ENCODE measurements at regions of chr4 and their contacts with region 1.

Region 1: GRCh38 chr4:26161030-26161824 is 159.6 kb upstream of the RBPJ start:
- DNase-seq: peak; percentile 33
- ATAC-seq: peak; percentile 94
- H3K4me3 Mint-ChIP-seq: no peak overlapping the region
- H3K27ac Mint-ChIP-seq: no peak overlapping the region
- H3K4me1 Mint-ChIP-seq: peaks cover 16% of the 10 kb centered on the region
- H3K27me3 Mint-ChIP-seq: no peaks in the 10 kb centered on the region
- CTCF ChIP-seq: no peak

Region 2: GRCh38 chr4:25949173-25949748 is 212.0 kb before region 1 on chr4:
- CTCF ChIA-PET with region 1: no interaction called
- POLR2A ChIA-PET with region 1: no interaction called
- DNase-seq: peak; percentile 54
- ATAC-seq: peak; percentile 58
- H3K4me3 Mint-ChIP-seq: no peak overlapping the region
- H3K27ac Mint-ChIP-seq: no peak overlapping the region
- H3K4me1 Mint-ChIP-seq: peaks cover 49% of the 10 kb centered on the region
- H3K27me3 Mint-ChIP-seq: peaks cover 4% of the 10 kb centered on the region; the same call in 1 of the 2 replicates
- CTCF ChIP-seq: no peak

Region 3: DNA sequence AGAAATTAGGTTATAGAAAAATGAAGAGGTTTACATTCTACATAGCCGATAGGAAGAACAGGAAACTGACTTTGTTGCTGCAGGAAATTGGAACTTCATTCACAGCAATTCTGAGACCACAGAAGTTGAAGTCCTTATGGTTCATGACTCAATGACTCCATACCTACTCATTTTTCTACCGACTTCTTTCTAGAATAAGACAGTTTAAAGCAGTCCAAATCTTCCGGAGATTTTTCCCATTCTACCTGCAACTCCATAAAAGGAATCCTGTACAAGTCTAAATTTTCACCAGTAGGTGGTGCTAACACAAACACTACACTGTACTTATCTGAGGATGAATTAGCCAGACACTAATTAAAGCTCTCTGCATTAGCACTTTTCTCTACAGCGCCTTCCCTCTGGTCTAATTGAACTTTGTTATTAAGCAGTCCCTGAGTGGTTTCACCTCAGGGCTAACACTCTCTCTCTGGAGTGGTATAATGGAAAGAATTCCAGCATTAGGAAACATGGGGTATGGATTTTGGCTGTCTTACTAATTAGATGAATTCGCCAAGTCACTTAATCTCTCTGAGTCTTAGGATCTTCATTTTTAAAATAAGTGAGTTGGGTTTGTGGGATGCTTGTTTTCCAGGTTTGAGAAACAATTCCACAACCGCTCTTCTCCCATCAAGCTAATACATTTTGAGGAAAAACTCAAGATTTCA is 79.3 kb before region 1 on chr4:
- CTCF ChIA-PET with region 1: interaction called, 16 read pairs
- POLR2A ChIA-PET with region 1: no interaction called
- DNase-seq: no peak
- ATAC-seq: peak; percentile 82
- H3K4me3 Mint-ChIP-seq: no peak overlapping the region
- H3K27ac Mint-ChIP-seq: no peak overlapping the region
- H3K4me1 Mint-ChIP-seq: peaks cover 23% of the 10 kb centered on the region
- H3K27me3 Mint-ChIP-seq: no peaks in the 10 kb centered on the region
- CTCF ChIP-seq: no peak

Region 4: DNA sequence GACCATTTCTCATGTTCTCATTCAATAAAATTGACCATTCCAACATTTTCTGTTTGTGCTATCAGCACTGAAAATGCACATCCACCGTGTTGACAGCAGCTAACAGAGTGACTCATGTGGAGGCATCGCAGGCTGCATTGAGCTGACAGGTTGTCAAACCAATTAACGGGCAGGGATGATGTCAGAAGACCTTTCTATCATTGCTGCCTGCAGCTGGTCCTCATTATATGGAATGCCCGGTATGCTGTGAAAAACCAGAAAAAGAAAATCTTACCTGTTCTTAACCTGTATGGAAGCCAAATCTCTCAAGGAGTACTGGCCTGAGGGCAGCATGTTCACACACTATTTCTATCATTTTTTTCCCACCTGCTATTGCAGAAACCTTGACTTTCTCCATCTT is 45.1 kb before region 1 on chr4:
- CTCF ChIA-PET with region 1: no interaction called
- POLR2A ChIA-PET with region 1: no interaction called
- DNase-seq: no peak
- ATAC-seq: no peak
- H3K4me3 Mint-ChIP-seq: no peak overlapping the region
- H3K27ac Mint-ChIP-seq: no peak overlapping the region
- H3K4me1 Mint-ChIP-seq: no peaks in the 10 kb centered on the region
- H3K27me3 Mint-ChIP-seq: no peaks in the 10 kb centered on the region; the same call in none of the 2 replicates
- CTCF ChIP-seq: no peak

Region 5: GRCh38 chr4:26346203-26346620 is 185.0 kb after region 1 on chr4:
- CTCF ChIA-PET with region 1: no interaction called
- POLR2A ChIA-PET with region 1: no interaction called
- DNase-seq: peak; percentile 23
- ATAC-seq: peak; percentile 67
- H3K4me3 Mint-ChIP-seq: no peak overlapping the region
- H3K27ac Mint-ChIP-seq: peak overlapping the region; percentile 87
- H3K4me1 Mint-ChIP-seq: peaks cover 70% of the 10 kb centered on the region
- H3K27me3 Mint-ChIP-seq: no peaks in the 10 kb centered on the region
- CTCF ChIP-seq: no peak